ENCODE measurements at regions of chr6 and their contacts with region 1.

Region 1: GRCh38 chr6:90296346-90297114 is at the start of gene BACH2:
- DNase-seq: peak; percentile 97
- H3K4me3 ChIP-seq: peak within 1 kb of the TSS; percentile 92 to 98 (median 96)
- H3K27ac ChIP-seq: peak within 1 kb of the TSS; percentile 96 to 97 (median 96)
- H3K4me1 ChIP-seq: peaks cover 9 to 36% (median 31%) of the 10 kb centered on the region in 4 donors
- H3K27me3 ChIP-seq: no peaks in the 10 kb centered on the region
- CTCF ChIP-seq: peak in 2 of 3 experiments; percentile 12 to 42
- EP300 ChIP-seq: no peak
- POLR2A ChIP-seq: peak; percentile 29
- total RNA-seq, gene BACH2: 4.2 to 9.8 (median 5.8) TPM

Region 2: GRCh38 chr6:89970609-89971337 is 325.8 kb before region 1 on chr6:
- intact Hi-C with region 1: loop called (anchors 5 kb)
- DNase-seq: no peak
- H3K4me3 ChIP-seq: no peak overlapping the region
- H3K27ac ChIP-seq: no peak overlapping the region
- H3K4me1 ChIP-seq: peaks cover 0 to 8% (median 7%) of the 10 kb centered on the region in 4 donors
- H3K27me3 ChIP-seq: no peaks in the 10 kb centered on the region
- CTCF ChIP-seq: peak; percentile 64 to 73 (median 67)
- EP300 ChIP-seq: no peak
- POLR2A ChIP-seq: no peak

Region 3: DNA sequence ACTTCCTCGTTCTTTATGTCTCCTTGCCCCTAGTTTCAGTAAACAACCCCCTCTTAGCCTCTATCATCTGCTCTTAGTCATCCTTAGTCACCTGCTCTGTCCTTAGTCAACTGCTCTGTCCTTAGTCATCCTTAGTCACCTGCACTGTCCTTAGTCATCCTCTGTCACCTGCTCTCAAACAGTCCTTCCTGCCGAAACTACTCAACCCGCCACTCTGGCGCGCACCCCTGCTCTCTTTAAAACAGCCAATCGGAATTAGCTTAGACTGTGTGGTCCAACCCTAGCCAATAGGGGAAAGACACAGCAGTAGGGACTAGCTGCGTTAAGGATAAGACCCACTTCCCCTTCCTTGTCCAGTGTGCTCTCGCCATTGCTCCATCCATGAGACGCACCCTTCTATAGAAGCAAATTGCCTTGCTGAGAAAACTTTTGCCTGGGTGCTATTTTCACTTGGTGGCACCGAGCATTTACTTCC is 73.8 kb before region 1 on chr6:
- intact Hi-C with region 1: loop called (anchors 5 kb)
- DNase-seq: no peak
- H3K4me3 ChIP-seq: no peak overlapping the region
- H3K27ac ChIP-seq: no peak overlapping the region
- H3K4me1 ChIP-seq: peaks cover 24 to 37% (median 29%) of the 10 kb centered on the region in 4 donors
- H3K27me3 ChIP-seq: no peaks in the 10 kb centered on the region
- CTCF ChIP-seq: no peak
- EP300 ChIP-seq: no peak
- POLR2A ChIP-seq: no peak

Region 4: GRCh38 chr6:90393232-90393884 is 96.8 kb after region 1 on chr6:
- intact Hi-C with region 1: loop called (anchors 2 kb)
- DNase-seq: no peak
- H3K4me3 ChIP-seq: no peak overlapping the region
- H3K27ac ChIP-seq: no peak overlapping the region
- H3K4me1 ChIP-seq: peaks cover 0 to 6% (median 2%) of the 10 kb centered on the region in 4 donors
- H3K27me3 ChIP-seq: no peaks in the 10 kb centered on the region
- CTCF ChIP-seq: peak; percentile 75 to 84 (median 80)
- EP300 ChIP-seq: no peak
- POLR2A ChIP-seq: no peak